A673 (cell line): ENCODE measurements at regions of chr20 and their contacts with region 1.

Region 1: DNA sequence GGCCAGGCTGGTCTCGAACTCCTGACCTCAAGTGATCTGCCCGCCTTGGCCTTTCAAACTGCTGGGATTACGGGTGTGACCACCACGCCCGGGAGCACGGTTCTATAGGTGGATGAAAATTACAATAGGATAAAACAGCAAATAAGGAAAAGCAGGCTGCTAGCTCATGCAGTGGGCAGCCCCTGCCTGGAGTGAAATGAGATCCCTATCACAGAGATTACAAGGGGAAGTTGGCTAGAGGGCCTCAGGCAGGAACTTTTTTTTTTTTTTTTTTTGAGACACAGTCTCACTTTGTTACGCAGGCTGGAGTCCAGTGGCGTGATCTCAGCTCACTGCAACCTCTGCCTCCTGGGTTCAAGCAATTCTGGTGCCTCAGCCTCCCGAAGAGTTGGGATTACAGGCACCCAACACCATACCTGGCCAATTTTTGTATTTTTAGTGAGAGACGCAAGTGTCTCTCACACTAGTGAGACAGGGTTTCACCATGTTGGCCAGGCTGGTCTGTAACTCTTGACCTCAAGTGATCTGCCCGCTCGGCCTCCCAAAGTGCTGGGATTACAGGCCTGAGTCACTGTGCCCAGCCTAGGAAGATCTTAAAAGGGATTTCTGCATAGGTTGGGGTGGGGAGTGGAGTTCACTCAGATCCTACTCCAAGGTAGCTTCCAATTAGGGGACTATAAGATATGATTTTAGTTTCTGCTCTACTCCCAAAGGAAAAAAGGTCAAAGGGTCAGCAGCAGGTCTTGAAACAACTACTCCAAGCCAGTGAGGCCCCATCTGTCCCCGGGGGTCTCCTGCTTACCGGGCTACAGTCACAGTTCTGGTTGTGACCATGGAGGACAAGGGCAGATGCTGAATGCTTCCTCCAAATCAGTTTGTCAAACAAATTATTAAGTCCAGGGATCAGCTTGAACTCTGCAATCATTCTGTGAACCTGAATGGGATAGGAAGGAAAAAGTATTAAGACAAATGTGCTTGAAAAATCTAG is 59.8 kb downstream of the MYH7B start:
- DNase-seq: no peak
- H3K4me3 ChIP-seq: no peak overlapping the region
- H3K27ac ChIP-seq: no peak overlapping the region
- H3K4me1 ChIP-seq: no peaks in the 10 kb centered on the region
- H3K27me3 ChIP-seq: no peaks in the 10 kb centered on the region
- CTCF ChIP-seq: no peak

Region 2: GRCh38 chr20:34753706-34754461 is 261.6 kb before region 1 on chr20:
- CTCF ChIA-PET with region 1: no interaction called
- POLR2A ChIA-PET with region 1: no interaction called
- intact Hi-C with region 1: no loop called
- DNase-seq: no peak
- H3K4me3 ChIP-seq: no peak overlapping the region
- H3K27ac ChIP-seq: no peak overlapping the region
- H3K4me1 ChIP-seq: no peaks in the 10 kb centered on the region
- H3K27me3 ChIP-seq: no peaks in the 10 kb centered on the region
- CTCF ChIP-seq: no peak

Region 3: GRCh38 chr20:35039146-35039545 is 23.6 kb after region 1 on chr20:
- CTCF ChIA-PET with region 1: no interaction called
- POLR2A ChIA-PET with region 1: interaction called, 11 read pairs
- intact Hi-C with region 1: no loop called
- DNase-seq: no peak
- H3K4me3 ChIP-seq: no peak overlapping the region
- H3K27ac ChIP-seq: no peak overlapping the region
- H3K4me1 ChIP-seq: no peaks in the 10 kb centered on the region
- H3K27me3 ChIP-seq: no peaks in the 10 kb centered on the region
- CTCF ChIP-seq: no peak